ENCODE measurements at regions of chr4 and their contacts with region 1.

Region 1: GRCh38 chr4:73620115-73620792 is at the start of gene RASSF6:
- DNase-seq: peak; percentile 86
- H3K4me3 ChIP-seq: peak within 1 kb of the TSS; percentile 85
- H3K27ac ChIP-seq: peak within 1 kb of the TSS; percentile 100
- H3K4me1 ChIP-seq: peaks cover 54% of the 10 kb centered on the region
- CTCF ChIP-seq: peak; percentile 45; the same call in 1 of the 2 replicates
- total RNA-seq, gene RASSF6: 32.5 and 48.3 TPM in 2 replicates

Region 2: DNA sequence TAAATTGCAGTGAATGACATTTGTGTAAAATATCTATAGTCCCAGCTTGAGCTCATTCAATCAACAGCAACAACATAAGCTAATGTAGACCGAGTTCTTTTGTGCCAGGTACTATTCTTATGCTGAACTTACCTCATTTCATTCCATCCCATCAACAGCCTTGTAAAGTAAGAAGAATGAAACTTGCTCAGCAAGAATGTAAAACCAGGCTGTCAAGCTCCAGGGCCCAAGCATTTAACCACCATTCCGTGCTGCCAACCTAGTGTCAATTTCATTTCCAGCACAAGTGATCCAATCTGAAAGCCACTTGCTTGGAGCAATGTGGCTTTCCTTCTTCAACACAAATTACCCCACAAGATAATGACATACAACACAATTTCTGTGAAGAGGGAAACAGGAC is 36.6 kb before region 1 on chr4:
- CTCF ChIA-PET with region 1: no interaction called
- POLR2A ChIA-PET with region 1: interaction called, 60 read pairs
- intact Hi-C with region 1: no loop called
- DNase-seq: no peak
- H3K4me3 ChIP-seq: no peak overlapping the region
- H3K27ac ChIP-seq: peak overlapping the region; percentile 3
- H3K4me1 ChIP-seq: peaks cover 24% of the 10 kb centered on the region
- CTCF ChIP-seq: no peak

Region 3: GRCh38 chr4:73593631-73594241 is 26.5 kb before region 1 on chr4:
- CTCF ChIA-PET with region 1: no interaction called
- POLR2A ChIA-PET with region 1: interaction called, 60 read pairs
- intact Hi-C with region 1: loop called (anchors 1 kb)
- DNase-seq: peak; percentile 61
- H3K4me3 ChIP-seq: no peak overlapping the region
- H3K27ac ChIP-seq: peak overlapping the region; percentile 100
- H3K4me1 ChIP-seq: peaks cover 97% of the 10 kb centered on the region
- CTCF ChIP-seq: peak; percentile 97

Region 4: DNA sequence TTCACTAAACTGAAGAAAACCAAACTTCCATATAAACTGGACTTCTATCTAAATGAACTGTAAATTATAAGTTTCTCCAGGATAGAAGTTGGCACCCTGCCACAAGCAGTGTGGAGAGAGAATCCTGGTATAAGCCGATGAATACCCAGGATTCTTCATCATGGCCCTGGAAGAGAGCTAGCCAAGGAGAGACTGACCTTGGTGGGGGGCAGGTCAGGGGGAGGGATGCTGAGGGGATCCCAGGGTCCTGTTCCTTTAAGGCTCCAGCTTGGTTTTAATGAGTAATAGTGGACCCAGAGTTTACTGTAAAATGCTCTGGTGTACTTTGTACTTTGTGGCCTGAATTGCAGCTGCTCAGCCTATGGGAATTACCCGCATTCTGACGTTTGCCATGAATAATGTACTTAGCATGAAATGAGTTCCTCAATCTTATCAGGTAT is 17.0 kb before region 1 on chr4:
- CTCF ChIA-PET with region 1: no interaction called
- POLR2A ChIA-PET with region 1: interaction called, 115 read pairs
- intact Hi-C with region 1: loop called (anchors 1 kb)
- DNase-seq: no peak
- H3K4me3 ChIP-seq: no peak overlapping the region
- H3K27ac ChIP-seq: peak overlapping the region; percentile 100
- H3K4me1 ChIP-seq: peaks cover 92% of the 10 kb centered on the region
- CTCF ChIP-seq: no peak

Region 5: DNA sequence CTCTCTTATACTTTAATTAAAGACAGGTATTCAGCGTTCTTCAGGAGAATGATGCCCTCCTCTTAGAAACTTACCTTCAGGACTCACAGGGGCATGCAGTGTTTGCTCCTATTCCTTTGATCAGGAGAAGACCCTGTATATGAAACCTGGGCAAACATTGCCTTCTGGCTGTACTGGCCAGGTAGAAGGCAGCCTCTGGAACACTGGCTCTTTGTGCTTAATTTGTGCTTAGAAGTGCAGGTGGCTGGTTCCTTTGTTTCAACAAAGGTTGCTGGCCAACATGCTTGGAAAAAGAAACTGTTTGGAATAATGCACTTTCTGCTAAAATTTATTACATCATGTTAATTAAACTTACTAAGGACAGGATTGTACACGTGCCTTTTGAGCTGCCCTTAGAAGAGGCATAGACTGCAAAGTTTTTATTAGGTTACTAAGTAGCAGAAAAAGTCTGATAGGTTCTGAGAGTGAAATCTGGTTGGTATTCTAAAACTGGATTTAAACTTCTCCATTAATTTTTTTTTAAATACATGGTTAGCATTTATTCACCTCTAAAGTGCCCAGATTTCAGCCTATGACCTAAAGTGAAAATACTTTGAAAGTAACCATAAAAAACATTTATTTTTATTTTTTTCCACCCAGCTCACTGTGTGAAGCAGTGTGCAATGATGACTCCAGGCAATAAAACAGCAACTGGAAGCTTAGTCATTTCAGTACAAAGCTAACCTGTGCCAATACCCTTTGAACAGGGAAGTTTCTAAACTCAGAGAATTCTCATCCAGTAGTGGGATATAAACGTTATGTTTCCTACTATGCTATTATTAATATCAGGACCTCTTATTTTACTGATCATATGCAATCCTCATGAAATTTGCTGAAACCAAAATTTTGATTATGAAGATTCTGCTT is 11.3 kb before region 1 on chr4:
- CTCF ChIA-PET with region 1: no interaction called
- POLR2A ChIA-PET with region 1: interaction called, 115 read pairs
- intact Hi-C with region 1: loop called (anchors 1 kb)
- DNase-seq: peak; percentile 38
- H3K4me3 ChIP-seq: peak overlapping the region; percentile 59
- H3K27ac ChIP-seq: peak overlapping the region; percentile 100
- H3K4me1 ChIP-seq: peaks cover 99% of the 10 kb centered on the region
- CTCF ChIP-seq: no peak

Region 6: DNA sequence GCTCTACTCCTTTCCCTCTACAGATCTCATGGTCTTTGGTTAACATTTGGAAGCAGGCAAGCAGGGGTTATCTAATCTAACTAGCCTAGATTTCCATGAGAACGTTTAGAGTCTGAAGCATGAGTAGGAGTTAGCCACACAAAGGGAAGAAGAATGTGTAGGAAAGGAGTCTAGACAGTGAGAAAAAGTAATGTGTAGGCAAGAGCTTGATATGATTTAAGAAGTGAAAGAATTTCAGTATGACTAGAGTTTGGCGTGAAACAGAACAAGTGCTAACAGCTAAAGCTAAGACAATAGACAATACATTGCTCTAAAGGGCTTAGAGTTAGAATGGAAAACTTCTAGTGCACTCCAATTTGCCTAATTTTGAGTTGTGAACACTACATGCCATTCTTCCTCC is 130.9 kb after region 1 on chr4:
- CTCF ChIA-PET with region 1: no interaction called
- POLR2A ChIA-PET with region 1: no interaction called
- intact Hi-C with region 1: no loop called
- DNase-seq: no peak
- H3K4me3 ChIP-seq: no peak overlapping the region
- H3K27ac ChIP-seq: no peak overlapping the region
- H3K4me1 ChIP-seq: no peaks in the 10 kb centered on the region
- CTCF ChIP-seq: no peak